ENCODE measurements at regions of chr4 and their contacts with region 1.

Region 1: GRCh38 chr4:76430519-76431388 is 4.3 kb upstream of the SHROOM3 start:
- DNase-seq: peak; percentile 59
- H3K4me3 ChIP-seq: no peak overlapping the region
- H3K27ac ChIP-seq: no peak overlapping the region
- H3K4me1 ChIP-seq: no peaks in the 10 kb centered on the region
- H3K27me3 ChIP-seq: no peaks in the 10 kb centered on the region
- CTCF ChIP-seq: peak; percentile 61

Region 2: DNA sequence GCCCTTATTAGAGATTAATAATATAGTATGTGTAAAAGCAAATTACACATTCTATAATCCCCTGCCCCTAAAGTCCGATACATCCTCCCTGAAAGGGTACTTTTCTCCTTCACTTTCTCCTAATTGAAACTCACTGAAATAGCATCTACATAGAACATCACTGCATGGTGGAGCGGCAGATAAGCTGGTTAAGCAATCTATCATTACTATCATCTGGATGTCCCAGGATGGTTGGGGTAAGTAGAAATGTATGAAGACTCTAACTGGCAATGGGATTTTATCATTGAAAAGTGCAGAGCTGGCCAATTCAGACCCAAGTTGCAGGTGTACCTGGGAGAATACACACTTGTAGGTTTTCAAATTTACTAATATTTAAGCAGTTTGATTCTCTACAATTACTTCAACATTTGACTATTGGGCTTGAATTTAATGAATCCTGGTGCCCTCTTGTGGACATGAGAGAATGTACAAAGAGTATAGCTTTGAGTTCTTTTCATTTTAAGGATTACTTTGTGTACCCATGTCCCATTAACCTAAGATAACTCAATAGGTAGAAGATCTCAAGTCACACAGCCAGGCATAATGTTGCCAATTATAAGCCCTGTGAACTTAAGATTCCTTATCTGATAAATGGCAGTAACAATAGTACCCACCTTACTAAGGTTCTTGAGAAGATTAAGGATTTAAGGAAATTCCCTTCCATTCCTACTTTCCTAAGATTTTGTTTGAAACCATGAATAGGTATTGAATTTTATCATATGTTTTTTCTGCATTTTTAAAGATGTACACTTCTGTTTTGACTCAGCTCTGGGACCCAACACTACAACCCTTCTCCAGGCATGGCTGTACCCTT is 74.1 kb after region 1 on chr4:
- CTCF ChIA-PET with region 1: no interaction called
- POLR2A ChIA-PET with region 1: no interaction called
- intact Hi-C with region 1: loop called (anchors 1 kb)
- DNase-seq: peak; percentile 58
- H3K4me3 ChIP-seq: no peak overlapping the region
- H3K27ac ChIP-seq: no peak overlapping the region
- H3K4me1 ChIP-seq: no peaks in the 10 kb centered on the region
- H3K27me3 ChIP-seq: no peaks in the 10 kb centered on the region
- CTCF ChIP-seq: peak; percentile 60

Region 3: GRCh38 chr4:76758290-76758882 is 327.6 kb after region 1 on chr4:
- CTCF ChIA-PET with region 1: no interaction called
- POLR2A ChIA-PET with region 1: no interaction called
- intact Hi-C with region 1: loop called (anchors 5 kb)
- DNase-seq: peak; percentile 40
- H3K4me3 ChIP-seq: no peak overlapping the region
- H3K27ac ChIP-seq: no peak overlapping the region
- H3K4me1 ChIP-seq: peaks cover 9% of the 10 kb centered on the region
- H3K27me3 ChIP-seq: no peaks in the 10 kb centered on the region
- CTCF ChIP-seq: peak; percentile 70